GM10248 (cell line): ENCODE measurements at regions of chr16 and their contacts with region 1.

Region 1: DNA sequence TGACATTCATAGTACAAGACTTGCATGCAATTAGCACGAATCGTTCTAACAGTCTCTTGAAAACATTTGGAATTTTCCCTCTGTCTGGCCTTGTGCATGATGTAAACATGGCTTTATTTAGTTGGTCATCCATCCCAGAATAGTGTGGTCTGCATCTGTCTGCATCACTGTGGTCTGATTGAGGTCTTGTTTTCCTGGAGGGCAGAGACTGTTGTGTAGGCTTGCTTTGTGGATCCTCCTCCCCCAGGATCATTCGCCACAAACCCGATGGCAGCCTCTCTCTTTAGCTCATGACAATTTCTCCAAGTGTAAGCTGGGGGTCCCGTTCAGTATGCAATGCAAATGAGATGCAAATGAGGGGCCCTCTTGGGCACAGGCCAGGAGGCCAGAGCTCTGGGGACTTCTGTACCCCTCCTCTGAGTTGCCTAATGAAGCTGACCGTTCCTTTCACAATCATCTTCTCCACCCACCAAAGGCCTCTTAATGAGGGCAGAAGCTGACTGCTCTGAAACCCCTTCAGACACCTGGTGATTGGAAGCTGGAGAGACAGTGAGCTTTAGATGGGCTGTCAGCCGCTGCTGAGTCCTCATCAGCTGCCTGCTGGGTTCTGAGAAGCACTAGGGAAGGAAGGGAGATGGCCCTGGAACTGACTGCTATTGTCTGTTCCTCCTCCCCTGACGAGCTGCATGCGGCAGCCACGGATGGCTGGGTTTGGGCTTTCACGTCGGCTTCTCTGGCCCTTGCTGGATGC is 201.2 kb upstream of the CACNG3 start:
- DNase-seq: no peak
- CTCF ChIP-seq: no peak

Region 2: GRCh38 chr16:24041826-24042631 is 12.9 kb before region 1 on chr16:
- CTCF ChIA-PET with region 1: interaction called, 27 read pairs
- POLR2A ChIA-PET with region 1: no interaction called
- DNase-seq: peak; percentile 82
- CTCF ChIP-seq: peak; percentile 65